ENCODE measurements at regions of chr2 and their contacts with region 1.

Region 1: DNA sequence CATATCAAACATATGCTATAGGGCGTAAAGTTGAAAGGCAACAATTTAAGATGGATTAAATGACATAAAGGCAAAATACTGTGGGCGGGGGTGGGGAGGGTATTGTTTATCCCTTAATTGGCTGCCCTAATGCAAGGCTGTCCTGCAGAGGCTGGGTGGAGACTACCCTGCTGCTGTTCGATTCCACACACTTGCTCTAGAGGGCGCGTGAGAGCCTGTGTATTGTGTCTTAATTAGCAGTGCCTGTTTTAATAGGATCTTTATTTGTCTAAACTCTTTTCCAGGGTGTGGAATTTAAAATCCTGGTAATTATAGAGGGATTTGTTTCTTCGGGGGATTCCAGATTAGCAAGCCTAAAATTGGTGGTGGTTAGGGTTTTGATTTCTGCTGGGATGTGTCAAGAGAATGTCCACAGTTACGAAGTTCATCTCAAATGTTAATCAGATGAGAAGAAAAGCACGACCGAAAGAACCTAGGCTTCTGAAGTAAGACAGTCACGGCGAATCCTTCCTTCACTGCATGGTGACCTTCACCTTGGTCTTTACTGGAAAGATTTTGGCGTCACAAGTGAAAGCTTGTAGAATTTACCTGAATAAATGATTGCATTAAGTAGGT is 103.5 kb upstream of the MAP3K20 start:
- DNase-seq: no peak
- H3K4me3 ChIP-seq: no peak overlapping the region
- CTCF ChIP-seq: peak; percentile 85

Region 2: GRCh38 chr2:172461591-172462372 is 510.3 kb before region 1 on chr2:
- CTCF ChIA-PET with region 1: no interaction called
- POLR2A ChIA-PET with region 1: no interaction called
- DNase-seq: no peak
- H3K4me3 ChIP-seq: no peak overlapping the region
- CTCF ChIP-seq: peak; percentile 91

Region 3: DNA sequence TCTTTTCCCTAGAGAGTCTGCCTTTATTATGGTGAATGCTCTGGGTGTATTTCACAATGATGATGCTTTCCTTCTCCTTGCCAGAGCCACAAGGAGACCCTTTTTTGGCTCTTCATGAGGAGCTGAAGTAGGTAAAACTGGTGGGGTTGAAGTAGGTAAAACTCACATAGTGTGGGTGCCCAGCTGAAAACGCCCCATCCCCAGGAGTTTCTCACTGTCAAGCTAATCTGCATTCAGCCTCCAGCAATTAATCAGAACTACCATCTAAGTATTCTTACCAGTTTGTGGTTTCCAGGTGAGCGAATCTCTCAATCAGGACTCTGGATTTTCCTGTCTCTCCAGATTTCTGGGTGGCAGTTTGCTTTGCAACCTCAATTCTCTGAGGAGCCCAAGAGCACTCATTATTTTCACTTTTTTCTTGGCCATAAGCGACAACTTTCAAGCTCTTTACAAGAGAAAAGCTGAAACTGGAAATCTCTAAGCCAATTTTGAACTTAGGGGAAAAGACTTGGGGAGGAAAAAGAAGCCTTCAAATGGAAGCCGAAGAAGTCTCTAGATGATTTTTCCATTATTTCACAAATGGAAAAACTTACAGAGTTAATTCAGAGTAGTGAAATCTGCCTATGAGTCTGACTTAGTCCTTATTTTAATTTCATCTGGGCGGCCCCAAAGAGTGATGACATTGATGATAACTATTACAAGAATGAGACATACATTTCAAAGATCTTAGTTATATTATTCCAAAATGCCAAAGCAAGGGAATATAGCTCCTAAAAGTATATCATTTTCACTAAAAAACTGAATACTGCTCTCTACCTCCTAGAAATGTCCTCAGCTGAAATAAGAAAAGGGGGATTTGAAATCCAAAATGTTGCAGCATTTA is 17.9 kb before region 1 on chr2:
- CTCF ChIA-PET with region 1: interaction called, 12 read pairs
- POLR2A ChIA-PET with region 1: no interaction called
- DNase-seq: no peak
- H3K4me3 ChIP-seq: no peak overlapping the region
- CTCF ChIP-seq: no peak

Region 4: DNA sequence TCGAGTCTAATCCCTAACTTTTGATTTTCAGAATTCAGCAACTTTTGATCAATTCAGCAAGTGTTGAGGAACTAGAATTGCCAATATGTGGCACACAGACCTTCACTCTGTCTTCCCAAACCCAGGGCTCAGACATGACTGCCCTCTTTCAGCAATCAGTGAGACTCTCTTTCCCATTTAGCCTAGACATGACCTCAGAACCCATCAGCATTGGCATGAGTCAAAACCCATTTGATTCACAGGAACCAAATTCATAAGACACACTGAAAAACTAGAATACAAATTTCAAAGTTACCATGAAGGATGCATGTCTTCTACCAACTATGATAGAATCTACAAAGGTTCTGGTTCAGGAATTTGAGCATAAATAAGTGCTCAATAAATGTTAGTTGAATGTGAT is 10.0 kb before region 1 on chr2:
- CTCF ChIA-PET with region 1: interaction called, 12 read pairs
- POLR2A ChIA-PET with region 1: no interaction called
- DNase-seq: no peak
- H3K4me3 ChIP-seq: no peak overlapping the region
- CTCF ChIP-seq: no peak

Region 5: GRCh38 chr2:172985139-172985901 is 13.2 kb after region 1 on chr2:
- CTCF ChIA-PET with region 1: interaction called, 80 read pairs
- POLR2A ChIA-PET with region 1: no interaction called
- DNase-seq: no peak
- H3K4me3 ChIP-seq: no peak overlapping the region
- CTCF ChIP-seq: no peak

Region 6: GRCh38 chr2:172995323-172996244 is 23.5 kb after region 1 on chr2:
- CTCF ChIA-PET with region 1: interaction called, 63 read pairs
- POLR2A ChIA-PET with region 1: no interaction called
- DNase-seq: peak; percentile 92
- H3K4me3 ChIP-seq: no peak overlapping the region
- CTCF ChIP-seq: peak; percentile 54

Measured in AG04449 (cell line).